AG04450 (cell line): ENCODE measurements at regions of chr11 and their contacts with region 1.

Region 1: GRCh38 chr11:30346068-30346688 is 23.3 kb downstream of the ARL14EP start:
- DNase-seq: peak; percentile 15
- H3K4me3 ChIP-seq: no peak overlapping the region
- H3K27ac ChIP-seq: no peak overlapping the region
- H3K27me3 ChIP-seq: no peaks in the 10 kb centered on the region
- CTCF ChIP-seq: peak; percentile 62

Region 2: DNA sequence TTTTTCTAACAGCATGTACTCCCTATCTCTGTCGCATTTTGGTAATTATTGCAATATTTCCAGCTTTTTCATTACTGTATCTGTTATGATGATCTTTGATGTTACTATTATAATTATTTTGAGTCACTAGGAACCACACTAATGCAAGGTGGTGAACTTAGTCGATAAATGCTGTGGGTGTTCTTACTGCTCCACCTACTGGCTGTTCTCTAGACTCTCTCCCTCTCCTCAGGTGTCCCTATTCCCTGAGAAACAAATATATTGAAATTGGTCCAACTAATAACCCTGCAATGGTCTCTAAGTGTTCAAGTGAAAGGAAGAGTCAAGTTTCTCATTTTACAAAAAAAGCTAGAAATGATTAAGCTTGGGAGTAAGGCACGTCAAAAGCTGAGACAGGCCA is 12.8 kb before region 1 on chr11:
- CTCF ChIA-PET with region 1: interaction called, 12 read pairs
- POLR2A ChIA-PET with region 1: no interaction called
- DNase-seq: no peak
- H3K4me3 ChIP-seq: no peak overlapping the region
- H3K27ac ChIP-seq: no peak overlapping the region
- H3K27me3 ChIP-seq: no peaks in the 10 kb centered on the region
- CTCF ChIP-seq: peak; percentile 51

Region 3: DNA sequence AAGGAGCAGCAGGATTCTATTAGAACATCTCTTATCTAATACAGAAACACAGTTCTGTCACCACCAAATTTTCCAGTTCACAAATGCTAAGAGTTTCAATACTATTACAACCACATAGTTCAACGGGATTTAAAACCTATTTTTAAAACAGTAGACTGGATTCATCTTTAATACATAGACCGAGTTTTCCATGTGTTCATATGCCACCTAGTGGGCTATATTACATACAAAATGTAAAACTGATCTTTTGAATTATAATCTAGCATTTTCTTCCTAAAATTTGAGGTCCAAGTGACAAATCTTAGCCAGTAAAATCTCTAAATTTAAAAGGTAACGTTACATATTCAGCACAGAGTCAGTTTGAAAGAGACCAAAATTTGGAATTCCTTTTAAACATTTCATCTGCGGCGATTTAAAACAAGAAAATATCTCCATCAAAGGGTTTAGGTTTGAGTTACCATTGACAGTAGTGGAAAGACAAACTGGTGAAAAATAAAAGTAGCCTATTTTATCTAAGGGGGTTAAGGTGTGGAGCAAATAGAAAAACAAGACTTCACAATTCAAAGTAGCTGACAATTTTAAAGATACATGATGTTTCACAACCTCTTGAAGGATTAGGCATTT is 509.3 kb after region 1 on chr11:
- CTCF ChIA-PET with region 1: interaction called, 17 read pairs
- POLR2A ChIA-PET with region 1: no interaction called
- DNase-seq: no peak
- H3K4me3 ChIP-seq: no peak overlapping the region
- H3K27ac ChIP-seq: no peak overlapping the region
- H3K27me3 ChIP-seq: no peaks in the 10 kb centered on the region
- CTCF ChIP-seq: peak; percentile 17; the same call in 1 of the 2 replicates

Region 4: DNA sequence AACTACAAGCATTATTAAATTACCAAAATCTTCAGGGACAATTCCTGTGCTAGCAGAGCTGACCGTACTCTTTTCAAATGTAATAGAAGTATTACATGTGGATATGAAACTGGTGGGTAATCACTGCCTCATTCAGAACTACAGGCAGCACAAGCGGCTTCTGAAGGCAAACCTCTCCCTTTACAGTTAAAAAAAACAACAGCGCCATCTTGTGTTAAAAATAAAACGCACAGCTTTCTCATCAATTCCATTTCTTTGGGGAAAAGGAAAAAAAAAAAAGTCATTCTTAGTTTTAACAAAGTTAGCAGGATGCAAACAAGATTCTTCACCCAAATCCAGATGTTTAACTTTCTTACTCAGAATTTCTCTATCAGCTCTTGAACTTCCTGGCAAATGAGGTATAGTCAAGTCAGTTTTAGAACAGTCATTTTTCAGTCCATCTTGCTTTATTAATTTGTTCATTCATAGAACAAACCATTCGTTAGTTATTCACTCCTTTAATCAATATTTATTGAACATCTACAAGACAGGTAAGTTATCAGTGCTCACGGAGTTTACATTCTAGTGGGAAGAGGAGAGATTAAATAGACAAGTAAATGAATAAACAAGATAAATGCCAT is 571.8 kb after region 1 on chr11:
- CTCF ChIA-PET with region 1: interaction called, 77 read pairs
- POLR2A ChIA-PET with region 1: no interaction called
- DNase-seq: peak; percentile 4
- H3K4me3 ChIP-seq: no peak overlapping the region
- H3K27ac ChIP-seq: no peak overlapping the region
- H3K27me3 ChIP-seq: no peaks in the 10 kb centered on the region
- CTCF ChIP-seq: peak; percentile 58